ENCODE measurements at regions of chr5 and their contacts with region 1.

Region 1: DNA sequence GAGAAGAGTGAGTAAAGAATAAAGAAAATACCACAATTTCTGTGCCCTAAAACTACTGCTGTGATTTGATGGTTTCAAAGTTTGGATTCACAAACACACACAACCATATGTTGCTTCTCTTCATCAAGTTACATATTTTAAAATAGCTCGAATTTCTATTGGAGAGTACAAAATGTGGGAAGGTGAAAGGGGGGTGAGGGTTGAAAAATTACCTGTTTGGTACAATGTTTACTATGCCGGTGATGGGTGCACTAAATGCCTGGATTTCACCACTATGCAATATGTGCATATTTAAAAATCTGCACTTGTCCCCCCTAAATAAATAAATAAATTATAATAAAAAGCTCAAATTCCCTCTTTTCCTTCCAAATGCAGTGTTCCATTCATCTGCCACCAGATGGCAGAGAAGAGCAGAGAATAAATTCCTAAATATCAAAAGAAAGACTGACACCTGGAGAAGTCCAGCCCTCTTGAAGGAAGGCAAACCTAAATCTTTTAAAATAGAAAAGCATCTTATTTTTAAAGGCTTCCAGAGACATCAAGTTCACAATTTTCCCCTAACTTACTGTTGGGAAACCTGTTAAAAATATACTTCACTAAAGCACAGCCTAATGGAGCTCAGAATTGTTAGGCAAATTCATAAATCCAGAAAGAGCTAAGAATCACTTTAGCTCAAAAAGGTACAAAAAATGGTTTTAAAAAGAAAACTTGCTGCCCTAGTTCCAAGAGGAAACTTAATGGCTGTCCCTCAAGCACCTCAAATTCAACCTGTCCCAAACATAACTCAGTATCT is 24.8 kb upstream of the HNRNPA0 start:
- DNase-seq: peak; percentile 27
- CTCF ChIP-seq: peak; percentile 58

Region 2: DNA sequence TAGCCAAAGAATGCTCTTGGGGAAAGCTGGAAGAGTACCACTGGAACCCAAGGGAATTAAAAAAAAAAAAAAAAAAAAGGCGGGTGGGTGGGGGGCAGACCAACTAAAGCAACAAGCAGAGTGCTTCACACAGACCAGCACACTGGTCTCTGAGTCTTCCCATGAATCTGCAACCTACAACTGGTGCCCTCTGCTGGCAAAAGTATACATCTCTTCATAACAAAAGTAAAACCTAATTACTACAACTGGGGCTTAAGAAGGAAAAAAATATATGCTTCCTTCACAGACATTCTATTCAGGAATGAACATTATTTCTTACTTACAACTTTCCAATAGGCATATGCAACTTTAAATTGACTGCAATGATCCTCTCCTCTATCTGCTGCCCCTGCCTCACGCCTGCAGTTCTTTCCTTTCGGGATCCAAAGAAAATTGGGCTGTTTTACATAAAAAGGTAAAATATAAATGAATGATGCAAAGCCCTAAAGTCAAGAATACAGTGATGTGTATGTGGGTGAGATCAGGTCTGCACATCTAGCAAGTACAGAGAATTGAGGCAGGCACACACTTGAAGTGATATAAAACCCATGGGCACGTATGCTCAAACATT is 35.8 kb before region 1 on chr5:
- CTCF ChIA-PET with region 1: interaction called, 11 read pairs
- POLR2A ChIA-PET with region 1: no interaction called
- DNase-seq: peak; percentile 53
- CTCF ChIP-seq: peak; percentile 65

Region 3: GRCh38 chr5:137791387-137791786 is 12.4 kb after region 1 on chr5:
- CTCF ChIA-PET with region 1: interaction called, 13 read pairs
- POLR2A ChIA-PET with region 1: no interaction called
- DNase-seq: no peak
- CTCF ChIP-seq: no peak

Region 4: DNA sequence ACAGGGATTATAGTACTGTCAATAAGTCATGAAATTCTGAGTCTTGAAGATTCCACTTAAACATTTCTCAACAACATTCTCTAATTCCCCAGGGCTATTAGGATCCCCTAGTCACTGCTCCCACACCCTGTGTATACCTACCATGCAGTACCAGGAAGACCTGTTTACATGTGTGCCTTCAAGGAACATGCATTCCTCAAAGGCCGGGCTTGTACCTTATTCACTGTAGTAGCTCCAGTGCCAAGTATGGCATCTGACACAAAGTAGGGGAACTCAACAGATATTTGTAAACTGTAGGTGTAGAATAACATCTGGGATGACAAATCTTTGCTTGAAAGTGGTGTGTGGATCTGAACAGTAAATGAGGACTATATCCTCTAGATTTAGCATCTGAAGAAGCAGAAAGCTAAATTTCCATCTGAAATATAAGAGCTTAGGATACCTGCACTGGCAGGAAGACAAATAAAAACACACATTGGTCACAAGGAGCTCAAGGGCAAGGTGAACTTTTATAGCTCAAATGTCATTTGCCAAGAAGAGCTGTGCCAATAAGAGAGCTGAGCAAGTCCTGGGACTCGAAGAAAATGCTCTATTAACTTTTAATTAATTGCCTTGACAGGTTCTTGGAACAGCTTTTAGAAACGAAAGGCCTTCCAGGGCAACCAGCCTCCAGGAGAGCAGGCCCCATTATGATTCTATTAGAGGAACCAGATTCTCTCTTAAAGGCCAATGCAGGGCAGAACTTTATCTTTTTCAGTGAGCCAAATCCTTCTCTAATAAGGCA is 36.4 kb after region 1 on chr5:
- CTCF ChIA-PET with region 1: interaction called, 28 read pairs
- POLR2A ChIA-PET with region 1: no interaction called
- DNase-seq: no peak
- CTCF ChIP-seq: no peak

Region 5: GRCh38 chr5:137847687-137848086 is 68.7 kb after region 1 on chr5:
- CTCF ChIA-PET with region 1: interaction called, 14 read pairs
- POLR2A ChIA-PET with region 1: no interaction called
- DNase-seq: peak; percentile 28
- CTCF ChIP-seq: no peak

Region 6: GRCh38 chr5:138065102-138065501 is 286.1 kb after region 1 on chr5:
- CTCF ChIA-PET with region 1: interaction called, 28 read pairs
- POLR2A ChIA-PET with region 1: no interaction called
- DNase-seq: no peak
- CTCF ChIP-seq: no peak